AG04449 (cell line): ENCODE measurements at regions of chr2 and their contacts with region 1.

Region 1: GRCh38 chr2:236352761-236353593 is 88.8 kb upstream of the ASB18 start:
- DNase-seq: no peak
- H3K4me3 ChIP-seq: no peak overlapping the region
- CTCF ChIP-seq: peak; percentile 53

Region 2: GRCh38 chr2:236156095-236156859 is 196.7 kb before region 1 on chr2:
- CTCF ChIA-PET with region 1: no interaction called
- POLR2A ChIA-PET with region 1: no interaction called
- DNase-seq: no peak
- H3K4me3 ChIP-seq: no peak overlapping the region
- CTCF ChIP-seq: no peak

Region 3: GRCh38 chr2:236334122-236334876 is 18.7 kb before region 1 on chr2:
- CTCF ChIA-PET with region 1: interaction called, 10 read pairs
- POLR2A ChIA-PET with region 1: no interaction called
- DNase-seq: no peak
- H3K4me3 ChIP-seq: no peak overlapping the region
- CTCF ChIP-seq: no peak

Region 4: DNA sequence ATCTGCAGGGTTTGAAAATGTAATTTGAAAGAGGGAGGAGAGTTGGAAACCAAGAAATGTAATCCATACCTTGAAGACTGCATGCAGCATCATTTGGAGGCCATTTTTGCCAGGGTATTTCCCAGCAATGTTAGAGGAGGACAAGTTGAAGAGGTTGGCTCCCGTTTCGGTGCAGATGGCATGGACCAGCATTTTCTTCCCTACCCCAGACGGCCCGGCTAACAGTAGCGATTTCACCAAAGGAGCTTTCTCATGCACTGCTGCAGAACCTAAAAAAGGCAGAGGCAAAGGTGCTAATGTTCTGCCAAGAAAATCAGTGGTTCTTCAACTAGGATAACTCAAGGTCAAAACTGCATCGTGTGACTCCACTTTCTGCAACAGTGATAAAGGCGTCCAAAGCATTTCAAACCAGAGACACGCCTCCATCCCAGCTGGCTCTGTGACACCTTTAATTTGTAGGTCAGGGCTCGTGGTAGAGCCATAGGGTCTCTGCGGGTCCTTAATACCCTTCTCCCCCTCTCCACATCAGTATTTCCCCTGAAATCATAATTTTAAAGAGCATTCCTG is 10.8 kb after region 1 on chr2:
- CTCF ChIA-PET with region 1: interaction called, 11 read pairs
- POLR2A ChIA-PET with region 1: no interaction called
- DNase-seq: no peak
- H3K4me3 ChIP-seq: no peak overlapping the region
- CTCF ChIP-seq: no peak

Region 5: DNA sequence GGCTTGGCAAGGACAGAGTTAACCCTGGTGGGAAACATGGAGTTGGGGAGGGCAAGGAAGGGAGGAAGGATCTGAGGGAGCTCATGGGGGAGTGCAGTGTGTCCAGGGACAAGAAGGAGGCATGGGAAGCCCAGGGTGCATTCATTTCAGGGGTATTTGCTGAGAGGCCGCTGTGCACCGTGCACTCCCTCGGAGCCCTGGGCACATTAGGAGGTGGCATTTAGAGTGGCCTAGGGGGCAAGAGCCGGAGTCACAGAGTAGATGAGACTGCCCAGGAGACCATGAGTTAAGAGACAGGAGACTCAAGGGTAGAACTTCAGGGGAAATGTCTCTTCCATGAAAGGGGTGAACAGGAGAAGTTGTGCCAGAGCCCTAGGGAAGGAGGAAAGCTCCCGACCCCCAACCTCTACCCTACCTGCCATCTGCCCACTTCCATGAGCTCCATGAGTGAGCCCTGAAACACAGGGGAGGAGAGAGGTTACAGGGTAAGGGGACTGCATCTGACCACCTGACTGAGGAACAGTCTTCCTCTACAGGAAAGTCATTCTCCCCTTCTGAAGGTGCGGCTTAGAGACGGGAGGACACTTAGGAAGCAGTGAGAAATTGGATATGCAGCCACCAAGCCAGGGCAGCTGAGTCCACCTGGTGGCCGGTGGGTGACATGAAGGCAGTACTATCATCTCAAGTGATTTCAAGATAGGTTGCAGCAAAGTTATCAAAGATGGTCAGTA is 674.2 kb after region 1 on chr2:
- CTCF ChIA-PET with region 1: interaction called, 16 read pairs
- POLR2A ChIA-PET with region 1: no interaction called
- DNase-seq: peak; percentile 34
- H3K4me3 ChIP-seq: no peak overlapping the region
- CTCF ChIP-seq: peak; percentile 92

Region 6: DNA sequence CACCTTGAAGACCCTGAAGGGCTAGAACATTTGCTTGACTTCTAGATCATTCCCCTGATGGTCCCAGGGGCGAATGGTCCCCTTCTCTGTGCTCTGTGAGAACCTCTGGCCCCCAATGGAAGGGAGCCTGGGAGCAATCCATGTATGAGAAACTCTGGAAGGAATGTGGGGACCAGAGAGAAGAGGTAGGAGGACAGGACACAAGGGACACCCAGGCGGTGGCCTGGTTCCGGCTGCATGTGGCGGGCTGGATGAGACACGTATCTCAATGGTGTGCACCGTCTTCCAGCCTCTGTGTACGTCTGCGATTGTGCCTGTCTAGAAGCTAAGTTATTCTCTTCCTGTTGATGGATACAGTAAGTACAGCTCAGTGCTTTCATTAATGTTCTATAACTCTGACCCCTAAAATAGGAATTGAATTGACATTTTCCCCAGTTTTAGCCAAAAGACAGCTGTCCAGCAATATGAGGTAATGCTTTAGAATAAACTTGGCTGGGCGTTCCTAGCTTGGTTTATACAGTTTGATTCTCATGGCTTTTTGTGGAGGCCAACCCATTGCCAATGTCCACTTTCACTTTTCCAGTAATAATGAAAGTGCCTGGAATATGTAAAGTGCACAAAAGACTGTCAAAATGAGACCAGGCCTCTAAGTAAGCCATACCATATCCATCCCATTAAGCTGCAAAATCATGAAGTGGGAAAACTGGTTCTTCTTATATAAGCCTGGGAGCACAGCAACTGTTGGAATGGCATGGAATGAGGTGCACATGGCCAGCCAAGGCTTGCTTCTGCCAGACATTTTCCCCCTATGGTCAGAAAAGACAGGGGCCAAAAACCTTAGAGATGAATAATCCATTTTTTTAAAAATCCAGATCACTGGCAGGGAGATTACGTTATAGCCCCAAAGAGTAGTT is 702.7 kb after region 1 on chr2:
- CTCF ChIA-PET with region 1: interaction called, 394 read pairs
- POLR2A ChIA-PET with region 1: no interaction called
- DNase-seq: no peak
- H3K4me3 ChIP-seq: no peak overlapping the region
- CTCF ChIP-seq: no peak

Region 7: DNA sequence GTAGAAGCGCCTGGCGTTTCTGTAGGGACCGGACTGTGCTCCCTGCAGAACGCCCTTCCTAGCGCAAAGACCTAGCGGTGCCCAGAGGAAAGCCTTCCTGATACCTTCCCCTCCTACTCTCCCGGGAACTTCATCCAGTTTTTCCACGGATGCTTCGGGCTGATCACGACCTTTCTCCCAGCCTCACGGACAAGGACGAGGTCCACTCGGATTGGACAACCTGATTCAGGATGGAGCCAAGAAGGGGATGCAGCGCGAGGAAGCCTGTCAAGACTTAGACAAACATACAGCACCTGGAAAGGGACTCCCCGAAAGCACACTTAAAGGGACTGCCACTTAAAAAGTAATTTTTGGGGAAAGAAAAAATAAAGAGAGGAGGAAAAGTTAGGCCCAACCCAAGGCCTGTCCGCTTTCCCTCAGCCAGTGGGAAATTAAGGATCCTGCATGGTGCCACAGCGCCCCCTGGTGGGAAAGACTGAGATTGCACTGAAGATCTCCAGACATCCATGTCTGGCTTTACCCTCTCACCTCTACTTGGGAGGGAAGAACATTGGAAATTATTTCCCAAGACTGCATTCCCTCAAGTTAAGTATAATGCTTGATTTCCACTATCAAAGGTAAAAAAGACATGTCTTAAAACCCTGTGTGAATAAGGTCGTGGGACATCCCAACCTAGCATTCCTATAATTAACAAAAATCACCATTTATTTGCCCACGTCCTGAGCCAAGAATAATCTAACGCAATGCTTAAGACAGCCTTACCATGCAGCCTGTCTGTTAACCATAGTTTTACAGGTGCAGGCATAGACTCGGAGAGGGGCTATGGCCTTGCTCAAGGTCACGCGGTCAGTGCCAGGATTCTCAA is 719.3 kb after region 1 on chr2:
- CTCF ChIA-PET with region 1: interaction called, 394 read pairs
- POLR2A ChIA-PET with region 1: no interaction called
- DNase-seq: no peak
- H3K4me3 ChIP-seq: no peak overlapping the region
- CTCF ChIP-seq: peak; percentile 86